Adrenal gland (tissue), 19 donors: ENCODE measurements at regions of chr20 and their contacts with region 1.

Region 1: DNA sequence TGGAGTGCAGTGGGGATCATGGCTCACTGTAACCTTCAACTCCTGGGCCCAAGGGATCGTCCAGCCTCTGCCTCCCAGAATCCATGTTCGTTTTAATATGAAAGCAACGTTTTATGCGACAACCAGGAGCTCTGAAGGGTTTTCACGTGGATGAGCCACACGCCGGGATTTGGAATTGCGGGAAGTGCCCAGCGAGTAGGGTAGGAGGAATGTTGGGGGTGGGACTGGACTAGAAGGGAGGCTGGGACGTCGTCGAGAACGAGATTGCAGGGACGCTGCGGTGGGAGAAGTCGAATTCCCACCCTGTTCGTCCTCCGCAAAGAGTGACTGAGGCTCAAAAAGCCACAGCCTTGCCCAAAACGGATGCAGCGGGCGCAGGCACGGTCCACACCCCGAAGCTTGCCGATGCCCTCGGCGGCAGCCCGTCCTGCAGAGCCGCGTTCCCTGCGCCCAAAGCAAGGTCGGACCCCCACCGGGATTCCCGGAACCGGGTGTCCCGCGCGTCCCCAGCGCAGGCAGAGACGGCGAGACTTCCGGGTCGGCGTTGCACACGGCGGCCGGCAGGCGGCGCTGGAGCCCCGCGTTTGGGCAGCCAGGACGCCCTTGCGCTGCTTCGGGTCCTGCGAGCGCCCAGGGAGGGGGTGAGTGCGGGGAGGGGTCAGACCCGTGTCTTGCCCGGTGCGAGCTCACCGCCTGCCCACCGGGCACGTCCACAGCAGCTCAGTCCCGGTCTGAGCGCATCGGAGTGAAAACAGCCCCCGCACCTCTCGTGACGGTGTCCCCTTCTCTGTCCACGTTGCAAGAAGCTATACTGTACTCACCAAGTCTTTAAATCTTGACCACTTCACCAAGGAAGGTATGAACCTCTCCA is 87.8 kb downstream of the DHX35 start:
- DNase-seq: peak; percentile 69 to 85 (median 76)
- H3K4me3 ChIP-seq: peak overlapping the region; percentile 17 to 65 (median 46)
- H3K27ac ChIP-seq: peak overlapping the region in 3 of 5 donors; percentile 25 to 80 (median 56)
- H3K4me1 ChIP-seq: peaks cover 0 to 7% of the 10 kb centered on the region in 2 donors
- H3K27me3 ChIP-seq: no peaks in the 10 kb centered on the region
- CTCF ChIP-seq: peak; percentile 91 to 99 (median 95)
- POLR2A ChIP-seq: no peak

Region 2: GRCh38 chr20:38926142-38926933 is 123.6 kb before region 1 on chr20 and contains the start of gene FAM83D:
- intact Hi-C with region 1: loop called (anchors 5 kb)
- DNase-seq: peak; percentile 94 to 98 (median 97)
- H3K4me3 ChIP-seq: peak within 1 kb of the TSS in 2 of 4 donors; percentile 49 to 55
- H3K27ac ChIP-seq: no peak within 1 kb of the TSS
- H3K4me1 ChIP-seq: peaks cover 10% of the 10 kb centered on the region in 2 donors
- H3K27me3 ChIP-seq: no peaks in the 10 kb centered on the region
- CTCF ChIP-seq: peak in 1 of 6 experiments; percentile 97
- POLR2A ChIP-seq: peak; percentile 27 to 76
- total RNA-seq, gene FAM83D: 0.14 to 4.5 (median 0.77) TPM in 8 of 9 donors, not detected in the other

Region 3: GRCh38 chr20:39081255-39081654 is 31.3 kb after region 1 on chr20:
- intact Hi-C with region 1: loop called in 1 of 2 experiments (anchors 5 kb)
- DNase-seq: peak; percentile 75 to 95 (median 87)
- H3K4me3 ChIP-seq: no peak overlapping the region
- H3K27ac ChIP-seq: no peak overlapping the region
- H3K4me1 ChIP-seq: no peaks in the 10 kb centered on the region
- H3K27me3 ChIP-seq: no peaks in the 10 kb centered on the region
- CTCF ChIP-seq: peak; percentile 84 to 94 (median 90)
- POLR2A ChIP-seq: no peak